ENCODE measurements at regions of chr11 and their contacts with region 1.

Region 1: DNA sequence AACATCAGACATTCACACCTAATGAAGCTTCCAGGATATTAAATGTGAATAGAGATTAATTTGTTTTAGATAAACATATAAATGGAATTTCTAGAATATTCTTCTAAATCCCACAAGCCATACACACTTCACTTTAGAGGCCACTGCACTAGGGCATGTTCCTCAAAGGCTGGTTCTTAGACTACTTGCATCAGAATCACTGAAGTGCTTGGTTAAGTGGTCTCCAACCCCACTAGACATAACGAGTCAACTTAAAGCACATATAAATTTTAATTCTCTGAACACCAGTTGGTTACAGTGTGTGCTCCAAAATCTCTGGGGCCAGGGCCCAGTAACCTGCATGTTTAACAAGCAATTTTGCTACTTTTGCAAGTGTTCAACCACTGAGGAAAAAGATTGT is 7.9 kb upstream of the ALKBH8 start:
- DNase-seq: no peak
- ATAC-seq: no peak
- H3K4me3 ChIP-seq: no peak overlapping the region
- H3K27ac ChIP-seq: no peak overlapping the region
- H3K4me1 ChIP-seq: no peaks in the 10 kb centered on the region
- H3K27me3 ChIP-seq: peaks cover 0 to 17% (median 0%) of the 10 kb centered on the region in 9 donors
- CTCF ChIP-seq: no peak
- POLR2A ChIP-seq: no peak

Region 2: DNA sequence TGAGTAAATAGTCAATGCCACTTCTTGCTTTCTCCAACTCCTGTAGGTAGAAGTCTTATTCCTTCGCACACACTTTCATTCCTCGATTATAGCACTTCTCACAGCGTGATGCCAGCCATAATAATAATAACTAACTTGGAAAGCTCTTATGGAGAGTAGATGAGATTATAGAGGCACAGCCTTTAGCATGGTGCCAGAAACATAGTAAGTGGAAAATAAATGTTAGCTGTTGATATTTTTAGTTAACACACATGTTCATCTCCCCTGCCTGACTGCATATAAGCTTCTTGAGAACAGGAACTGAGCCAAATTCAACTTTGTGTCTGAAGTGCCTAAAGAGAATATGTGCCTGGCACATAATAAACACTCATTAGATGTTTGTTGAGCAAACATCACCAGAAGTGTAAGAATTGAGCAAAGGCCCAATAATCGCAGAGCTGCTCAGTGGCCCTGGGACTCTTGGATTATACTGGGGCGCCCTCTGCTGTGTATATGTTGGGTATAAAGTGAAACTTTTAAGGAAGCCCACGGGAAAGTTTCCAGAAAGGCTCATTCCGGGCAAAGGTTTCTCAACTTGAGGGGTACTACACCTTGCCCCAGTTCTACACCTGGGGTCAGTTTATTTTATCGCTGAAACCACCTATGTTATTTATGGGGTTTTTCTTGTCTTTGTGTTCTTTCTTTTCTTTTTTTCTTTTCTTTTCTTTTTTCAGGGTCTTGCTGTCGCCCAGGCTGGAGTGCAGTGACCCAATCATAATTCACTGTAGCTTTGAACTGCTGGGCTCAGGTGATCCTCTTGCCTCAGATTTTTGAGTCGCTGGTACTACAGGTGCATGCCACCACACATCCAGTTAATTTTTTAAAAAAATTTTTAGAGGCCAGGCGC is 116.1 kb after region 1 on chr11:
- intact Hi-C with region 1: loop called (anchors 1 to 5 kb)
- DNase-seq: peak in 4 of 5 donors; percentile 47 to 63 (median 58)
- ATAC-seq: peak; percentile 37 to 80 (median 76)
- H3K4me3 ChIP-seq: peak overlapping the region in 2 of 12 donors; percentile 19 to 31
- H3K27ac ChIP-seq: no peak overlapping the region
- H3K4me1 ChIP-seq: peaks cover 0 to 7% (median 0%) of the 10 kb centered on the region in 12 donors
- H3K27me3 ChIP-seq: peaks cover 0 to 2% (median 0%) of the 10 kb centered on the region in 9 donors
- CTCF ChIP-seq: peak; percentile 28 to 75 (median 64)
- POLR2A ChIP-seq: no peak

Region 3: DNA sequence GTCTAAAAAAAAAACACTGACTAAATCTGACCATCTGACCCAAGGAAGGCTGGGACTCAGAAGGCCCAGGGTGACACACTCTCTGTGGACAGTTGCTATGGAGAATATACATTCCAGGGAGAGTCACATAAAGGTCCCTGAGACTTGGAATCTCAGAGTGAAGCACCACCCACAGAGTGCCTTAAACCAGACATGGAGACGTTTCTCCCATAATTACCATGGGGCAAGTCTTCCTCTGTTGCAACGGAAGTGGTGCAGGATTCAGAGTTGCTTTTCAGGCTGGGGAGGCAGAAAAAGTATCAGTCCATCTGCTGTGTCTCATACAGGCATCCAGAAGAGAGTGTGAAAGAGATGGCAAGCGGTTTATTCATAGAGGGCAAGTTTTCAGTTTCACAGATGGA is 197.1 kb after region 1 on chr11:
- intact Hi-C with region 1: loop called (anchors 5 to 10 kb)
- DNase-seq: no peak
- ATAC-seq: no peak
- H3K4me3 ChIP-seq: no peak overlapping the region
- H3K27ac ChIP-seq: no peak overlapping the region
- H3K4me1 ChIP-seq: no peaks in the 10 kb centered on the region
- H3K27me3 ChIP-seq: peaks cover 0 to 4% (median 0%) of the 10 kb centered on the region in 9 donors
- CTCF ChIP-seq: no peak
- POLR2A ChIP-seq: no peak

Region 4: DNA sequence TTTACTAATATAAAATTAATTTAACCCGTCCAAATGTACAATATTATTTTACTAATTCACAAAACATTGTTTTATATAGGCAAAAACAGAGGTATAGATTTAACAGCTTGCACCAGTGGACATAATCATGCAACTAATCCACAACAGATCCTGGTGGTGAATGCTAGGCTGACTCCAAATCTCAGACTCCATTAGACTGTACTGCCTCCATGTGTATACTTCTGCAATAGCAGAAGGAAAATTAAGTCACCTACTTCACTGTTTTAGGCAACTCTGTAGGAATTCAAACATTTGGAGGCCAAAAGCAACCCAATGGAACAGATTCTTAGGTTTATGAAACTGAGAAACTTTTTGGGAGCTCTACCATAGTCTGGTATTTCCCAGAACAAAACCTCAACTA is 324.8 kb after region 1 on chr11:
- intact Hi-C with region 1: loop called in 3 of 10 experiments (anchors 10 kb)
- DNase-seq: no peak
- ATAC-seq: peak in 1 of 4 donors; percentile 51
- H3K4me3 ChIP-seq: no peak overlapping the region
- H3K27ac ChIP-seq: no peak overlapping the region
- H3K4me1 ChIP-seq: no peaks in the 10 kb centered on the region
- H3K27me3 ChIP-seq: no peaks in the 10 kb centered on the region
- CTCF ChIP-seq: peak in 11 of 12 donors; percentile 12 to 61 (median 41)
- POLR2A ChIP-seq: no peak